CD8-positive, alpha-beta T cell (primary cell): ENCODE measurements at regions of chr12 and their contacts with region 1.

Region 1: GRCh38 chr12:54279866-54280467 is at the start of gene CBX5:
- DNase-seq: peak; percentile 99 to 100 (median 100)
- ATAC-seq: peak; percentile 47
- H3K4me3 ChIP-seq: peak within 1 kb of the TSS; percentile 83 to 93
- H3K4me3 Mint-ChIP-seq: no peak within 1 kb of the TSS
- H3K27ac ChIP-seq: peak within 1 kb of the TSS; percentile 92 to 100
- H3K27ac Mint-ChIP-seq: no peak within 1 kb of the TSS
- H3K4me1 ChIP-seq: peaks cover 52% of the 10 kb centered on the region
- H3K4me1 Mint-ChIP-seq: peaks cover 14% of the 10 kb centered on the region
- H3K27me3 ChIP-seq: no peaks in the 10 kb centered on the region
- H3K27me3 Mint-ChIP-seq: no peaks in the 10 kb centered on the region
- CTCF ChIP-seq: no peak
- total RNA-seq, gene CBX5: 26.1 to 26.7 TPM

Region 2: GRCh38 chr12:54140588-54141388 is 139.2 kb before region 1 on chr12:
- CTCF ChIA-PET with region 1: no interaction called
- POLR2A ChIA-PET with region 1: no interaction called
- intact Hi-C with region 1: no loop called
- DNase-seq: no peak
- ATAC-seq: no peak
- H3K4me3 ChIP-seq: no peak overlapping the region
- H3K4me3 Mint-ChIP-seq: no peak overlapping the region
- H3K27ac ChIP-seq: no peak overlapping the region
- H3K27ac Mint-ChIP-seq: no peak overlapping the region
- H3K4me1 ChIP-seq: no peaks in the 10 kb centered on the region
- H3K4me1 Mint-ChIP-seq: no peaks in the 10 kb centered on the region
- H3K27me3 ChIP-seq: peaks cover 0 to 14% of the 10 kb centered on the region in 2 experiments
- H3K27me3 Mint-ChIP-seq: peaks cover 31% of the 10 kb centered on the region
- CTCF ChIP-seq: no peak

Region 3: GRCh38 chr12:54207484-54208294 is 72.3 kb before region 1 on chr12:
- CTCF ChIA-PET with region 1: no interaction called
- POLR2A ChIA-PET with region 1: no interaction called
- intact Hi-C with region 1: no loop called
- DNase-seq: peak; percentile 58 to 85 (median 80)
- ATAC-seq: peak; percentile 96
- H3K4me3 ChIP-seq: no peak overlapping the region
- H3K4me3 Mint-ChIP-seq: no peak overlapping the region
- H3K27ac ChIP-seq: no peak overlapping the region
- H3K27ac Mint-ChIP-seq: no peak overlapping the region
- H3K4me1 ChIP-seq: no peaks in the 10 kb centered on the region
- H3K4me1 Mint-ChIP-seq: peaks cover 3% of the 10 kb centered on the region
- H3K27me3 ChIP-seq: peaks cover 0 to 13% of the 10 kb centered on the region in 2 experiments
- H3K27me3 Mint-ChIP-seq: peaks cover 39% of the 10 kb centered on the region
- CTCF ChIP-seq: peak; percentile 85

Region 4: DNA sequence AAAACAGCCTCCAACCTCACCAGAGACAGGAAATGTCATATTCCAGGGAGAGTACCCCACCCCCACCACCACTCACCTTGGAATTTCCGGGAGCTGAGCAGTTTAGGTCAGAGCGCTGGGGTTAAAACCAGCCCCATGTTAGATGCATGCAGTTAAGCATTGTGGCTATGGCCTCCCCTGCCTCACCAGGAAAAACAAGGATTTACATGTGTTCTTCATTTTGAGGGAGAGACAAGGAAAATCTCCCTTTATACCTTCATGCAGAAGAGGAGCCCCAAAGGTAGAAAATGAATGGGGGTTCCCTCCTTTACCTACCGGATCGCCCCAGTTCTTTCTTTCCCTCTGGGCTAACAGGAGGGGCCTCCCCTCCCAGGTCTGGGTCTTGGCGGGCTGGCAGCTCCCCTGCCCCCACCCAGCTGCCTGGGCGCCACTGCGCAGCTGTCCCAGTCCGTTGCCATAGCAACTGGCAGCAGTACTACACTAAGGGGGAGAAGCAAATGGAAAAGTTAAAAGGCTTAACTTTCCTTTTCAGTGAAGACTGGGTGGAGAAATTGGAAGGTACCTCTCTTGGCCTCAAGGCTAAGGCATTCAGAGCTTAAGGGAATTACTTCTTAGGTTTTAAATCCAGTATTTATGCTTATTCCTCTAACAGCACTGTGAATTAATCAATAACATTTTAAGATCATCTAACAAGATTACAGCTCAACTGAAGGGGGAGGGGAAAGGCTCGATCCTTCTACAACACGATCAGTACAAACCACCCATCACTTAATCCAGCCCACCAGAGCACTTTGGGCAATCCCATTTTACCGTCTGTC is 20.6 kb before region 1 on chr12:
- CTCF ChIA-PET with region 1: interaction called, 3 read pairs
- POLR2A ChIA-PET with region 1: interaction called, 16 read pairs
- intact Hi-C with region 1: loop called in 1 of 2 experiments (anchors 1 kb)
- DNase-seq: peak in 8 of 9 experiments; percentile 11 to 82 (median 52)
- ATAC-seq: peak; percentile 95
- H3K4me3 ChIP-seq: peak overlapping the region; percentile 10 to 47
- H3K4me3 Mint-ChIP-seq: peak overlapping the region; percentile 75
- H3K27ac ChIP-seq: no peak overlapping the region
- H3K27ac Mint-ChIP-seq: peak overlapping the region; percentile 14
- H3K4me1 ChIP-seq: peaks cover 13% of the 10 kb centered on the region
- H3K4me1 Mint-ChIP-seq: peaks cover 22% of the 10 kb centered on the region
- H3K27me3 ChIP-seq: no peaks in the 10 kb centered on the region
- H3K27me3 Mint-ChIP-seq: no peaks in the 10 kb centered on the region
- CTCF ChIP-seq: no peak

Region 5: DNA sequence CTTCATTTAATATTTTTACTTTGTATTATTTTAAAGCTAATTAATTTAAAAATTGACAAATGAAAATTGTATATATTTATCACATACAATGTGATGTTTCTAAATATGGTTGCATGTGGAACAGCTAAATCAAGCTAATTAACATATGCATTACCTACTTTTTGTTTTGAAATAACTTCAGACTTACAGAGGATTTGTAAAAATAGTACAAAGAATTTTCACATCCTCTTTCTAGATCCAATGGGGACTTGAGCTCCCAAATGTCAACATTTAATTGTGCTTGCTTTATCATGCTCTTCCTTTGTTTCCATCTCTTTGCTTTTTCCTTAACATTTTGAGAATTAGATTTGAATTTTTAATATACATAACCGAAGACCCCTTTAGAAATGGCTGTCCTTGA is 361.6 kb after region 1 on chr12:
- CTCF ChIA-PET with region 1: no interaction called
- POLR2A ChIA-PET with region 1: no interaction called
- intact Hi-C with region 1: no loop called
- DNase-seq: no peak
- ATAC-seq: no peak
- H3K4me3 ChIP-seq: no peak overlapping the region
- H3K4me3 Mint-ChIP-seq: no peak overlapping the region
- H3K27ac ChIP-seq: no peak overlapping the region
- H3K27ac Mint-ChIP-seq: no peak overlapping the region
- H3K4me1 ChIP-seq: no peaks in the 10 kb centered on the region
- H3K4me1 Mint-ChIP-seq: no peaks in the 10 kb centered on the region
- H3K27me3 ChIP-seq: no peaks in the 10 kb centered on the region
- H3K27me3 Mint-ChIP-seq: peaks cover 19% of the 10 kb centered on the region
- CTCF ChIP-seq: no peak